ENCODE measurements at regions of chr7 and their contacts with region 1.

Region 1: DNA sequence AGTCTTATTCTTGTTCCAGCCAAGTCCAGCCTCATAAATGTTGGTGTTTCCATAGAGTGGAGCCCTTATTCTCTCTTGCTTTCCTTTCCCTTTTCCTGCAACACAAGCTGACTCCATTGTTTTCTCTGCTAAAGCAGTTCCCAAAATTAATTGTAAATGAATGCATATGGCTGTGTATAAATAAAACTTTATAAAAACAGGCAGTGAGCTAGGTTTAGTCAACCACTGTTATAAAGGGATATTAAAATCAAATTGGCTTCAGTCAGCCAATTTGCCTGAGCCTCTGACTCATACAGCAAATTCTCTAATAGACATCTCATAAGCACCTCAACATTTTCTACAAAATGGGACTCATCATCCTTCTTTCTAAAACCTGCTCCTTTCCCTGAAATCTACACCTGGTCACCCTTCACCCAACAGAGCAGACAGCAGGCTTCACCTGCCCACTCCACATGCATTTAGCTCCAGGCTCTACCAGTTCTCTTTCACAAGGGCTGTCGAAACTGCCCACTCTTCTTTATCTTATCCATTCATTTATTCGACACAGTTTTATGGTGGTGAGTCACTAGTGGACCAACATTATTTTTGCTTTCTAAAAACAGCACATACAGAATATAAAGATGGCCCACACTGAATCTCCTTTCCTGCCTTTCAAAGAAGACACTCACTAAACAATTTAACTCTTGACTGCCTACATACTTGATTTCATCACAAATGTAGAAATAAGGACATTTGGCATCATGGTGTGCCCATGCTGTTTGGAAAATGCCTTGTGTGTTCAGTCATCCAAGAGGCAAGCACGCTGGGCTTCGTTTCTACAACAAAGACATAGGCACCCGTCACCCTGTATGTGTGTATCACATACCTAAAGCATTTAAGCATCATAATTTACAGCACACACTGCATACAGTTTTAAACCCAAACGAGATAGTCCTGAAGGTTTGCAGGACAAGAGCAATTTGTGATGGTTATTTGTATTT is 74.6 kb upstream of the C7orf33 start:
- DNase-seq: no peak
- H3K4me3 ChIP-seq: no peak overlapping the region
- H3K27ac ChIP-seq: no peak overlapping the region
- H3K4me1 ChIP-seq: no peaks in the 10 kb centered on the region
- H3K27me3 ChIP-seq: no peaks in the 10 kb centered on the region
- CTCF ChIP-seq: no peak

Region 2: DNA sequence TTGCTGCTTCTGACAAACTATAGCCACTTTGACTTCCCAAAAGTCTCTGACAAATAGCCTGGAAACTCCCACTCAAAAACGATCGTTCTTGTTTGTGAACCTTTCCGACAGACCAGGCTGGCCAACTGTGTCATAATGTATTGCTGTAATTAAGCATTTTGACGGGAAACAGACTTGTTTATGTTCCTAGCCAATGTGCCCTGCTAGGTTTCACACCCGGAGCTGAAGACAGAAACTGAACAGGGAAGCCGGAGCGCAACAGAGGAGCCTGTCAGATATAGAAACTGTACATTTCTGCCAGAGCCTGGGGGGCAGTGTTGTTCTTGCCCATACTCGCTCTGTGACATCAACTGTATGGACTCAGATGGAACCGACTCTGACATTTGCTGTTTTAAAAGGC is 19.2 kb after region 1 on chr7:
- CTCF ChIA-PET with region 1: no interaction called
- POLR2A ChIA-PET with region 1: no interaction called
- intact Hi-C with region 1: loop called (anchors 2 kb)
- DNase-seq: no peak
- H3K4me3 ChIP-seq: no peak overlapping the region
- H3K27ac ChIP-seq: no peak overlapping the region
- H3K4me1 ChIP-seq: no peaks in the 10 kb centered on the region
- H3K27me3 ChIP-seq: no peaks in the 10 kb centered on the region
- CTCF ChIP-seq: peak; percentile 20; the same call in 1 of the 2 replicates

Region 3: DNA sequence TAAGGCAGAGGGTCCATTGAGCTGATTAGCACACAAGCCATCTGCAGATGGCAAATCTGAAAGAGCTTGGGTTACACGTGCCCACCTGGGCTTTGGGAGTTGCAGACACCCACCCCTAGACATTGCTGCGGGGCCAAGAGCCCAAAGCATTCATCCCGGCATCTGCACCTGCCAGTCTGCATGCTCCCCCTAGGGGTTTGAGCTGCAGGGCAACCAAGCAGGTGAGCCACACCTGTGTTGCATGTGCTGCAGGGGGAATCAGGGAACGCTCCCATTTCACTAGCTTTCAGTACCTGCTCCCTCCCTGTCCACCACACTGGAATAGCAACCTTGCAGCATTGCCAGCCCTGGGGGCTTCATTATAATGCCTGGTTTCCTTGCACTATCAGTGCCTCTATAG is 95.7 kb after region 1 on chr7:
- CTCF ChIA-PET with region 1: no interaction called
- POLR2A ChIA-PET with region 1: no interaction called
- intact Hi-C with region 1: no loop called
- DNase-seq: no peak
- H3K4me3 ChIP-seq: no peak overlapping the region
- H3K27ac ChIP-seq: no peak overlapping the region
- H3K4me1 ChIP-seq: no peaks in the 10 kb centered on the region
- H3K27me3 ChIP-seq: peaks cover 8% of the 10 kb centered on the region
- CTCF ChIP-seq: no peak

Measured in A673 (cell line).